ENCODE measurements at regions of chr7 and their contacts with region 1.

Region 1: GRCh38 chr7:117076426-117076943 is 123.2 kb downstream of the ST7 start:
- DNase-seq: no peak
- ATAC-seq: peak; percentile 20 to 57 (median 34)
- H3K4me3 ChIP-seq: no peak overlapping the region
- H3K27ac ChIP-seq: peak overlapping the region; percentile 58
- H3K4me1 ChIP-seq: peaks cover 37% of the 10 kb centered on the region
- H3K27me3 ChIP-seq: no peaks in the 10 kb centered on the region
- CTCF ChIP-seq: no peak

Region 2: DNA sequence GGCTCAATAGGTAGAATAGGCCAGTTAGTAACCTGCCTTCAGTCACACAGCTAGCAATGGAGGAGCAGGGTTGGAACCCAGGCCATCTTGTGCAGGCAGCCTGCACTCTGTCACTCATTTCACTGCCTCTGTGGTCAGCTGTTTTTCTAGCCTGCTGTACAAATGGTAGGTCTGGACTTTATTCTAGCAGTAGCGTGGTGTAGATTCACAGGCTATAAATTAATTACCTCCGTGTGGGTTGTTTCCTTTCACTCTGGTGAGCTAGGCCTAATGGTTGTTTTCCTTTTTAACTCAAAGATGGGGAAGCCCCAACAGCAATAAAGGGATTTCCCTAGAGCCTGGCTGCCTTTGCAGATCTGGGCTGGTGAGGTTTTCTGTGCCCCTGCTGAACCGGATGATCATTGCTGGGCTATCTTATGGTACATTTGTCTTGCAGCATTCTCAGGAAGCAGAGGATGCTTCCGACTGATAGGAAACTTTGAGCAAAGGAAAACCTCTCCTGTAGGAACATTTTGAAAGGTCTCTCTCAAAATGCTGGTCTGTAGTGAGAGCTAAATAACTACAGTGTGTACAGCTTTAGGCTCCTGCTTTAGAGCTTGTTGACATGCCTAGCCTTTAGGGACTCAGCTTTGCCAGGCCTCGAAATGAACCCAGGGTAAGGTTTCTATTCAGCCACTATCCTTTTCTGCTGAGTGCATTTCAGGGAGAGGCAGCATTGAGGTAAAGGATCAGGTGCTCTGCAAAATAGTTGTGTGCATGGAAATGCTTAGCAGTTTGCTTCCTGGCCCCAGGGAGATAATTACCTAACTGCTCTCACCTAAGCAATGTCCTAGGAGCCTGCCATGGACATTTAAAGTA is 34.2 kb after region 1 on chr7:
- intact Hi-C with region 1: loop called in 1 of 2 experiments (anchors 5 kb)
- DNase-seq: no peak
- ATAC-seq: peak in 3 of 4 donors; percentile 51 to 63 (median 56)
- H3K4me3 ChIP-seq: peak overlapping the region; percentile 34
- H3K27ac ChIP-seq: peak overlapping the region; percentile 69
- H3K4me1 ChIP-seq: peaks cover 47% of the 10 kb centered on the region
- H3K27me3 ChIP-seq: no peaks in the 10 kb centered on the region
- CTCF ChIP-seq: no peak

Region 3: GRCh38 chr7:117237646-117238045 is 161.2 kb after region 1 on chr7:
- intact Hi-C with region 1: no loop called
- DNase-seq: no peak
- ATAC-seq: no peak
- H3K4me3 ChIP-seq: no peak overlapping the region
- H3K27ac ChIP-seq: no peak overlapping the region
- H3K4me1 ChIP-seq: no peaks in the 10 kb centered on the region
- H3K27me3 ChIP-seq: peaks cover 0 to 2% (median 0%) of the 10 kb centered on the region in 3 donors
- CTCF ChIP-seq: no peak

Measured in psoas muscle (tissue), 8 donors.